ENCODE measurements at regions of chr22 and their contacts with region 1.

Region 1: DNA sequence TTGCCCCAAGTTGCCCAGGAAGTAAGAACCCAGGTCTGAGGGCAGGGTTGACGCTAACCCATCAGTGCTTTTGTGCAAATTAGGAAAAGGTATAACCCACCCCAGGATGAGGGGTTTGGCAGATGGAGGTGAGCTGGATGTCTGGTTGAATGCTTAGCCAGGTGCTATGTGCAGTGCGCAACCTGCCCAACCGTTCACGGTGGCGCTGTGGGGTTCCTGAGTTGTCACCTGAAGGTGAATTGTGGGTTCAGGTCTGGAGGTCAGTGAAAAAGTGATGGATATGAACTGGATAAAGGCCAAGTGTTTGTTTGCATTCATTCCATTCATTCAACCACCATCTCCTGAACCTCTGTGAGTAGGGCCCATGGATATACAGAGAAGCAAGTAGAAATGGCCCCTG is 14.3 kb upstream of the LGALS2 start:
- DNase-seq: no peak
- H3K4me3 Mint-ChIP-seq: no peak overlapping the region
- H3K27ac Mint-ChIP-seq: no peak overlapping the region
- H3K4me1 Mint-ChIP-seq: peaks cover 13% of the 10 kb centered on the region
- H3K27me3 Mint-ChIP-seq: no peaks in the 10 kb centered on the region

Region 2: GRCh38 chr22:37486224-37486845 is 107.9 kb before region 1 on chr22 and contains the start of gene MFNG:
- CTCF ChIA-PET with region 1: interaction called, 7 read pairs
- intact Hi-C with region 1: loop called (anchors 1 kb)
- DNase-seq: peak; percentile 86
- H3K4me3 Mint-ChIP-seq: peak within 1 kb of the TSS; percentile 97
- H3K27ac Mint-ChIP-seq: peak within 1 kb of the TSS; percentile 97
- H3K4me1 Mint-ChIP-seq: peaks cover 65% of the 10 kb centered on the region
- H3K27me3 Mint-ChIP-seq: no peaks in the 10 kb centered on the region
- total RNA-seq, gene MFNG: 83.1 to 90.9 TPM

Region 3: GRCh38 chr22:37544955-37545699 is 49.1 kb before region 1 on chr22:
- CTCF ChIA-PET with region 1: interaction called, 87 read pairs
- intact Hi-C with region 1: loop called (anchors 1 kb)
- DNase-seq: peak; percentile 87
- H3K4me3 Mint-ChIP-seq: no peak overlapping the region
- H3K27ac Mint-ChIP-seq: no peak overlapping the region
- H3K4me1 Mint-ChIP-seq: peaks cover 22% of the 10 kb centered on the region
- H3K27me3 Mint-ChIP-seq: peaks cover 8% of the 10 kb centered on the region

Region 4: DNA sequence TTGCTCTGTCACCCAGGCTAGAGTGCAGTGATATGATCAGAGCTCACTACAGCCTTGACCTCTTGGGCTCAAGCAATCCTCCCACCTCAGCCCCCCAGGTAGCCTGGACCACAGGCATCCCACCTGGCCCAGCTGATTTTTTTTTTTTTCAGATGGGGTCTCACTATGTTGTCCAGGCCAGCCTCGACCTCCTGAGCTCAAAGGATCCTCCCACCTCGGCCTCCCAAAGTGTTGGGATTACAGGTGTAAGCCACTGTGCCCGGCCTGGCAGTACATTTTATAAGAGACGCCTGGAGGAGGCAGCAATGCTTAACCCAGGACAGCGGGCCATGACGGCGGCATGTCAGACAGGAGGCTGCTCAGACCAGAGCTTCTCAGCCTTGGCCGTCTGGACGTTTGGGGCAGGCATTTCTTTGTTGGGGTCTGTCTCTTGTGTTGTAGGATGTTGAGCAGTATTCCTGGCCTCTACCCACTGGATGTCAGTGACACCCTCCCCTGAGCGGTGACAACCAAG is 18.7 kb before region 1 on chr22:
- CTCF ChIA-PET with region 1: interaction called, 14 read pairs
- intact Hi-C with region 1: no loop called
- DNase-seq: no peak
- H3K4me3 Mint-ChIP-seq: no peak overlapping the region
- H3K27ac Mint-ChIP-seq: no peak overlapping the region
- H3K4me1 Mint-ChIP-seq: peaks cover 9% of the 10 kb centered on the region
- H3K27me3 Mint-ChIP-seq: no peaks in the 10 kb centered on the region